ENCODE measurements at regions of chr14 and their contacts with region 1.

Region 1: GRCh38 chr14:85991156-85991555 is 461.2 kb downstream of the FLRT2 start:
- DNase-seq: no peak
- ATAC-seq: no peak

Region 2: DNA sequence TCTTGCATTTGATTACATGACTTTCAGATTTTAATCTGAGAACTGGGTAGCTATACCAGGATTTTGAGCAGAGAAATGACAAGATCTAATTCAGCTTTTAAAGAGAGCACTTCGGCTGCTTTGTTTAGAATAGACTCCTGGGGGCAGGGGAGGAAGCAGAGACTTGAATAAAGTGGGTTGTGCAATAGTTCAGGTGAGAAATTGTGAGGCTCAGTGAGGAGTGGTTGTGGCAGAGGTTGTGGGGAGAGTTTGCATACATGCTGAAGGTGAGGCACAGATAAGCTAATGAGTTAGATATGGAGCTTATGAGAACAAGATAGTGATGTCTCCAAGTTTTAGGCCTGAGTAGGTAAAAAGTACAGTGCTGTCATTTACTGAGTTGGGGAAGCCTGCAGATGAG is 179.8 kb before region 1 on chr14:
- intact Hi-C with region 1: loop called (anchors 5 kb)
- DNase-seq: no peak
- ATAC-seq: no peak

Region 3: GRCh38 chr14:86196471-86196870 is 205.3 kb after region 1 on chr14:
- intact Hi-C with region 1: no loop called
- DNase-seq: no peak
- ATAC-seq: no peak